PC-3 (cell line): ENCODE measurements at regions of chr14 and their contacts with region 1.

Region 1: GRCh38 chr14:37796703-37797416 is 201.4 kb downstream of the TTC6 start:
- DNase-seq: peak; percentile 36
- ATAC-seq: peak; percentile 53
- H3K4me3 ChIP-seq: no peak overlapping the region
- H3K27ac ChIP-seq: no peak overlapping the region
- H3K4me1 ChIP-seq: peaks cover 9% of the 10 kb centered on the region
- H3K27me3 ChIP-seq: no peaks in the 10 kb centered on the region
- CTCF ChIP-seq: no peak

Region 2: GRCh38 chr14:37708481-37708880 is 88.4 kb before region 1 on chr14:
- CTCF ChIA-PET with region 1: no interaction called
- POLR2A ChIA-PET with region 1: no interaction called
- intact Hi-C with region 1: no loop called
- DNase-seq: no peak
- ATAC-seq: no peak; the same call in 1 of the 2 replicates
- H3K4me3 ChIP-seq: no peak overlapping the region
- H3K27ac ChIP-seq: no peak overlapping the region
- H3K4me1 ChIP-seq: peaks cover 20% of the 10 kb centered on the region
- H3K27me3 ChIP-seq: no peaks in the 10 kb centered on the region
- CTCF ChIP-seq: no peak

Region 3: GRCh38 chr14:37816135-37816534 is 19.3 kb after region 1 on chr14:
- CTCF ChIA-PET with region 1: no interaction called
- POLR2A ChIA-PET with region 1: no interaction called
- intact Hi-C with region 1: loop called (anchors 2 kb)
- DNase-seq: no peak
- ATAC-seq: no peak
- H3K4me3 ChIP-seq: no peak overlapping the region
- H3K27ac ChIP-seq: no peak overlapping the region
- H3K4me1 ChIP-seq: peaks cover 13% of the 10 kb centered on the region; the same call in 1 of the 2 replicates
- H3K27me3 ChIP-seq: no peaks in the 10 kb centered on the region
- CTCF ChIP-seq: no peak